ENCODE measurements at regions of chr6 and their contacts with region 1.

Region 1: DNA sequence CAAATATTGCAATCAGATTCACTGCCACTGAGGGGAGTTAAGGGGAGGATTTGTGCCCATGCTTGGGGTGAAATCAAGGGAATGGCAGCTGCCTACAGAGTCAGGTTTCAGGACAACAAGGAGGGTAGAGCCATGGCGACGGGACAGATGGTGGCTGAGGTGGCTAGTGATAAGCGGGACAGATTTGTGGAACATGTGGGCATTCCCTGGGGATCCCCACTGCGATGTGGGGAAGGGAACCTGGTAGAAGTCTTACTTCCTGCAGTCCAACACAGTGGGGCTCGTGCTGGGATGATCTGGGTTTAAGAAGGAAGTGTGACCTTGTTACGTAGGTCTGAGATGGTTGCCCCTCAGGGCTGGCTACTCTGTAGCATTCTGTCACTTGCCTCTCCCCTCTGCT is 292.0 kb upstream of the JARID2 start:
- DNase-seq: no peak
- ATAC-seq: no peak
- H3K4me3 Mint-ChIP-seq: no peak overlapping the region
- H3K27ac Mint-ChIP-seq: no peak overlapping the region
- H3K4me1 Mint-ChIP-seq: peaks cover 16% of the 10 kb centered on the region
- H3K27me3 Mint-ChIP-seq: no peaks in the 10 kb centered on the region
- CTCF ChIP-seq: no peak

Region 2: GRCh38 chr6:15299430-15300131 is 345.7 kb after region 1 on chr6:
- CTCF ChIA-PET with region 1: no interaction called
- POLR2A ChIA-PET with region 1: interaction called, 10 read pairs
- intact Hi-C with region 1: no loop called
- DNase-seq: peak; percentile 59
- ATAC-seq: peak; percentile 97
- H3K4me3 Mint-ChIP-seq: peak overlapping the region; percentile 67
- H3K27ac Mint-ChIP-seq: peak overlapping the region; percentile 89
- H3K4me1 Mint-ChIP-seq: peaks cover 81% of the 10 kb centered on the region
- H3K27me3 Mint-ChIP-seq: no peaks in the 10 kb centered on the region
- CTCF ChIP-seq: no peak

Region 3: DNA sequence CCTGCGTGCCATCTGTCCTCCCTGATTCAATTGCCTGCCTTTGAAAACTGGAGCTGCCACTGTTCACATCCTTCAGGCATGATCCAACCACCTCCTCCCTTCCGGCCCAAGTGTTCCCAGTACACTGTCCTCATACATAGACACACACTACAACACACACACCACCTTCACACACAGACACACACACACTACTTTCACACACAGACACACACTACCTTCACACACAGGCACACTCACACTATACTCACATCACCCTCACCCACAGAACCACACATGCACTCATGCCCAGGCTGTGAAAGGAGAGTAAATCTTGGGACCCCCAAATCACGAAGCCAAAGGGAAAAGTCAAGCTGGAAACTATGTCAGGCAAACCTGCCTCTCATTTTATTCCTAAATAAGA is 1065.6 kb after region 1 on chr6:
- CTCF ChIA-PET with region 1: no interaction called
- POLR2A ChIA-PET with region 1: no interaction called
- intact Hi-C with region 1: no loop called
- DNase-seq: no peak
- ATAC-seq: no peak
- H3K4me3 Mint-ChIP-seq: no peak overlapping the region
- H3K27ac Mint-ChIP-seq: no peak overlapping the region
- H3K4me1 Mint-ChIP-seq: no peaks in the 10 kb centered on the region
- H3K27me3 Mint-ChIP-seq: no peaks in the 10 kb centered on the region
- CTCF ChIP-seq: no peak